Activated CD4-positive, alpha-beta T cell treated with anti-CD3 and anti-CD28 coated beads, Interleukin-2, amount 10 ng/mL, durations not matched to agents 24 days and 14 days (primary cell): ENCODE measurements at regions of chr16 and their contacts with region 1.

Region 1: GRCh38 chr16:58198022-58198683 is at the start of gene CSNK2A2:
- DNase-seq: peak; percentile 91
- H3K4me3 Mint-ChIP-seq: peak within 1 kb of the TSS; percentile 95
- H3K27ac Mint-ChIP-seq: peak within 1 kb of the TSS; percentile 88
- H3K4me1 Mint-ChIP-seq: peaks cover 34% of the 10 kb centered on the region
- H3K27me3 Mint-ChIP-seq: peaks cover 28% of the 10 kb centered on the region
- total RNA-seq, gene CSNK2A2: 92.0 and 96.7 TPM in 2 replicates

Region 2: GRCh38 chr16:58025351-58026138 is 172.6 kb before region 1 on chr16 and contains the start of gene MMP15:
- intact Hi-C with region 1: loop called (anchors 5 kb)
- DNase-seq: peak; percentile 89
- H3K4me3 Mint-ChIP-seq: peak within 1 kb of the TSS; percentile 88
- H3K27ac Mint-ChIP-seq: peak within 1 kb of the TSS; percentile 70
- H3K4me1 Mint-ChIP-seq: peaks cover 12% of the 10 kb centered on the region
- H3K27me3 Mint-ChIP-seq: peaks cover 26% of the 10 kb centered on the region
- total RNA-seq, gene MMP15: 0.89 and 1.1 TPM in 2 replicates

Region 3: GRCh38 chr16:58236231-58236690 is 38.1 kb after region 1 on chr16:
- intact Hi-C with region 1: loop called (anchors 2 kb)
- DNase-seq: peak; percentile 90
- H3K4me3 Mint-ChIP-seq: peak overlapping the region; percentile 88
- H3K27ac Mint-ChIP-seq: no peak overlapping the region
- H3K4me1 Mint-ChIP-seq: peaks cover 14% of the 10 kb centered on the region
- H3K27me3 Mint-ChIP-seq: peaks cover 38% of the 10 kb centered on the region